ENCODE measurements at regions of chr21 and their contacts with region 1.

Region 1: GRCh38 chr21:20215959-20216358 is 782.2 kb upstream of the NCAM2 start:
- DNase-seq: no peak
- H3K4me3 ChIP-seq: no peak overlapping the region
- H3K27ac ChIP-seq: no peak overlapping the region
- H3K4me1 ChIP-seq: no peaks in the 10 kb centered on the region
- H3K27me3 ChIP-seq: no peaks in the 10 kb centered on the region
- CTCF ChIP-seq: no peak
- POLR2A ChIP-seq: no peak

Region 2: DNA sequence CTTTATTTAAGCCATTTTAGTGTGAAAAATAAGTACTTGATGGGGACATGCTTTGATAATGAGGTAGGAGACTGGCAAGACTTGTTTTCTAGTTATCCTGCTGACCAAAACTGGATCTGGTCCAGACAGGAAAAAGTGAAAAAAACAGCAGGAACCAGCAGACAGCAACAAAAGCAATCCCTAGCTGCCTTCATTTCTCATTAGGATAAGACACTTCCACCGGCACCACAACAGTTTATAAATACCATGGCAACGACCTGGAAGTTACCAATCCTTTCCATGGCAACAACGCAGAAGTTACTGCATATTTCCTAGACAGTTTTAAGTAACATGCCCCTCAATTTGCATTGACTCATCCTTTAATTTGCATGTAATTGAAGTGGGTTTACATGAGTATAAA is 211.6 kb before region 1 on chr21:
- intact Hi-C with region 1: loop called (anchors 5 kb)
- DNase-seq: no peak
- H3K4me3 ChIP-seq: no peak overlapping the region
- H3K27ac ChIP-seq: no peak overlapping the region
- H3K4me1 ChIP-seq: no peaks in the 10 kb centered on the region
- H3K27me3 ChIP-seq: no peaks in the 10 kb centered on the region
- CTCF ChIP-seq: no peak
- POLR2A ChIP-seq: no peak

Region 3: DNA sequence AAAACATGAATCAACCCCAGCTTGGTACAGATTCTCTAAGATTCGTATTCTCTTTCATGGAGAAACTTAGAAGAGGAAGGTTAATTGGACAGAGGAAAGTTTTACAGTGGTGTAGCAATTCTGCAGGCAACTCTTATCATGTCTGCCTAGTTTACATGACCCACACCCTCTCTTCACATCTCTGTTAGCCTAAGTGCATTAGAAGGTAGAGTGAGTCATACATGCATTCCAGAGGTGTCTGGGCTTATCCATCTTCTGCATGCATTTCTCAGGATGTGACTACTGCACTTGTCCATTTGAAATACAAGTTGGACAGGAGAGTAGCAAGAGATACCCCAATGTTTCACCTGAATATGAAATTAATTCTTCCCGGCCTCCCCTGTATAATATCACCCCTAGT is 203.8 kb after region 1 on chr21:
- intact Hi-C with region 1: no loop called
- DNase-seq: no peak
- H3K4me3 ChIP-seq: no peak overlapping the region
- H3K27ac ChIP-seq: no peak overlapping the region
- H3K4me1 ChIP-seq: no peaks in the 10 kb centered on the region
- H3K27me3 ChIP-seq: no peaks in the 10 kb centered on the region
- CTCF ChIP-seq: no peak
- POLR2A ChIP-seq: no peak